Heart left ventricle (tissue), 16 donors: ENCODE measurements at regions of chr15 and their contacts with region 1.

Region 1: DNA sequence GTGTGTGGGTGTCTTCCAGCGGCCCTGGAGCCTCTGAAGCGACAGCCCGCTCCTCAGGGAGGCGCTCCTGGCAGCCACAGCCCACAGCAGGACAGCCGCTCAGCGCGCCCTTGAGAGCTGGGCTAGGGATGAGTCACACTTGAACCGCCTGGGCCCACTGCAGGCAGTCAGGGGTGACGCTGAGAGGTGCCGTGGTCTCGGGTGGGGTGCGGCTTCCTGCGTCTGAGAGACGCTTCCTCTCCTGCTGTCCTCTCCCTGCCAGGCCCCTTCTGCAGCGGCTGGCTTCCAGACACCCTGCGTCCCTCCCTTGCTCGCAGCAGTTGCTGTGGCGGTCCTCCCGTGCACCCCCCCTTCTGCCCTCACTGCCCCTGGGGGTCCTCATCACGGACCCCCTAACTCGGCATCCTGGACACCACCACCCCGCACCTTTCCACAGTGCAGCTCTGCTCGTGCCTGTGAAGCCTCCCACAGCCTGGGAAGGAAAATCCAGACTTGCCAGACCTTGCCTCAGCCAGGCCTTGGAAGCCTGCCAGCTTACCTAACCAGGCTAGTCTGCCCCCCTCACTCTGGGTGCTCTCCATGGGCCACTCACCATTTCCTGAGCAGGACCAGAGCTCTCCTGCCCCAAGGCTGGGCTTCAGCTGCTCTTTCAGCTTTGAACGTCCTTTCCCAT is 1.1 kb upstream of the SPTBN5 start:
- DNase-seq: peak; percentile 83 to 92 (median 90)
- ATAC-seq: peak; percentile 77 to 90 (median 85)
- H3K4me3 ChIP-seq: peak overlapping the region in 10 of 12 donors; percentile 20 to 67 (median 56)
- H3K27ac ChIP-seq: peak overlapping the region; percentile 18 to 96 (median 88)
- H3K4me1 ChIP-seq: peaks cover 9 to 35% (median 26%) of the 10 kb centered on the region in 12 donors
- H3K27me3 ChIP-seq: no peaks in the 10 kb centered on the region
- CTCF ChIP-seq: peak in 5 of 12 donors; percentile 19 to 48 (median 31)
- POLR2A ChIP-seq: no peak

Region 2: GRCh38 chr15:41820791-41821423 is 74.0 kb before region 1 on chr15:
- intact Hi-C with region 1: loop called in 6 of 10 experiments (anchors 5 kb)
- DNase-seq: no peak
- ATAC-seq: no peak
- H3K4me3 ChIP-seq: no peak overlapping the region
- H3K27ac ChIP-seq: no peak overlapping the region
- H3K4me1 ChIP-seq: no peaks in the 10 kb centered on the region
- H3K27me3 ChIP-seq: no peaks in the 10 kb centered on the region
- CTCF ChIP-seq: no peak
- POLR2A ChIP-seq: no peak

Region 3: GRCh38 chr15:41936649-41937567 is 42.0 kb after region 1 on chr15:
- intact Hi-C with region 1: no loop called
- DNase-seq: peak; percentile 49 to 77 (median 64)
- ATAC-seq: peak; percentile 7 to 50 (median 42)
- H3K4me3 ChIP-seq: peak overlapping the region in 1 of 12 donors; percentile 7
- H3K27ac ChIP-seq: peak overlapping the region; percentile 58 to 93 (median 73)
- H3K4me1 ChIP-seq: peaks cover 20 to 96% (median 80%) of the 10 kb centered on the region in 12 donors
- H3K27me3 ChIP-seq: no peaks in the 10 kb centered on the region
- CTCF ChIP-seq: peak in 1 of 12 donors; percentile 23
- POLR2A ChIP-seq: no peak

Region 4: DNA sequence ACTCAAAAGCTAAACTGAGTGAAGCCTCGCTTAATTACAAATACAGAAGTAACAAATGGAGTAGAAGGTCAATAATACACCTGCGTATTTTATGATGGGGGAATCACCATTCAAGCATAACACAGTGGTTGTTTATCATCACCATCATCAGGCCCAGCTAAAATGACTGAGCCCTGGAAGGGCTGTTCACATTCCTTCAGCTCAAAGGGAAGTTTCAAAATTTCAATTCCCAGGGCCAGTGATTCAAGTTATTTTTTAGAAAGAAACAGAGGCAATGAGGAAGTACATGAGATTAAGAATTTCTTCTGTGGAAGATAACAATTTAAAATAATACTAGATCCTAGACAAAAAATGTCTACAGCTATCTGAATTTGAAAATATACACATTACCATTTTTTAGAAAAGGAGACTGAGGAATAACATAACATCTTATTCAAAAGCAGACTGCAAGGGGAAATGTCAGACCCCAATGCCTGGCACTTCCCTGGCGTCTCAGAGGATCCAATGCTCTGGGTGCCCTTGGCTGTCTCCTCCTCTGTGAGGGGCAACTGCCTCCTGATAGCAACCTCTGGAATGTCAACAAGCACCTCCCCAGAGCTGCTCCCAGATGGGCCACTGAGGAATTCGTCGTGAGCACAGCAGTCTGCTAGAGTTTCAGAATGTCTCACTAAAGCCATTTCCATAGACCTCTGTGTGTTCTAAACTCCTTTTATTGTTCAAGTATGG is 54.6 kb after region 1 on chr15:
- intact Hi-C with region 1: loop called in 1 of 10 experiments (anchors 2 kb)
- DNase-seq: no peak
- ATAC-seq: no peak
- H3K4me3 ChIP-seq: no peak overlapping the region
- H3K27ac ChIP-seq: peak overlapping the region in 11 of 12 donors; percentile 8 to 85 (median 76)
- H3K4me1 ChIP-seq: peaks cover 15 to 88% (median 76%) of the 10 kb centered on the region in 12 donors
- H3K27me3 ChIP-seq: no peaks in the 10 kb centered on the region
- CTCF ChIP-seq: no peak
- POLR2A ChIP-seq: no peak